ENCODE measurements at regions of chr17 and their contacts with region 1.

Region 1: DNA sequence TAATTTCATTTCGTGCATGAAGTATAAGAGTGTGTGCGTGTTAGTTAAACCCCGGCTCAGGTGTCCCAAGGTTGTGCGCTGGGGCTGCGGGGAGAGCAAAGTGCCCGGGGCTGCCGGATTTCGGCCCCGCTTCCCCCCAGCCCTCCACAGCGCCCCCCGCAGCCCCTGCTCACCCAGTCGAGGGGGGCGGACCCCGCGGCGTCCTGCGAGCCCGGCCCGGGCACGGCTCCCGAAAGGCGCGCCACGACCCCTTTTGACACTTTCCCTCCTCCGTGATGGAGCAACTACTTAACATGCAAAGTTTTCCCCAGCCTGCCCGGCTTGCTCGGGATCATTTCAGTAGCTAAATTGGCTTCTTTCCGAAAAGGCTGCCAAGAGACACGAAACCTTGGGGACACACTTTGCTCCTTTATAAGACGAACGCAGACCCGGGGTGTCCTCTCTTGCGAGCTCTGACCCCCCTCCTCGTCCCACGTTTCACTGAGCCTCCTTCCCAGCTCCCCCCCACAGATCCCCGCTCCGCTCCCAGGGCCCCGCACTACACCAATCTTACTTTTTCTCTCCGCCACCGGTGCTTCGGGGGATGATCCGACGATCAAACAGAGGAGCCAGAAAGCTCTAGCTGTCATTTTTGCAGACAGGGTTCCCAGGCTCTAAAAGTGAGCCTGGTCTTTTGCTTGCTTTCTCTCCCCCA is 552 bp downstream of the C17orf58 start:
- DNase-seq: peak in 2 of 3 donors; percentile 39 to 45
- H3K4me3 ChIP-seq: peak overlapping the region; percentile 25 to 83 (median 67)
- H3K27ac ChIP-seq: no peak overlapping the region
- H3K4me1 ChIP-seq: peaks cover 5 to 33% (median 27%) of the 10 kb centered on the region in 4 experiments
- H3K27me3 ChIP-seq: peaks cover 0 to 21% (median 8%) of the 10 kb centered on the region in 5 experiments

Region 2: DNA sequence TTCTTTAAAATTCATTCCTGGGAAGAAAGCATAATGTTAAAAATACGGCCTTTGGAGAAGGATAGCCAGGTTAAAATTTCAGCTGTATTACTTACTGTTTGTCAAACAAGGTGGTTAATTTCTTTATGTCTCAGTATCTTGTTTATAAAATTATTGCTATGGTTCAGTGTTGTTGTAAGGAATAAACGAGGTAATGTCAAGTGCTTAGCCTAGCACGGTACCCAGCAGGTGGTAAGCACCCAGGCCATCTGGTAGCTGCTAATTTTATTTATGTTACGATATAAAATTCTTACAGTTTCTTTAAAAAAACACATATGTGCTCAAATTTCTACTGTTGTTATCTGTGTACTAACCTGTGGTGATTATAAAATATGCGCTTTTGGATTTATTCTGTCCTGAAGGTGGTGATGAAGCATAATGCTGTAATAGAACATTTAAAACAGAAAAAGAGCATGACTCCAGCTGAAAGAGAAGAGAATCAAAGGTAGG is 48.3 kb before region 1 on chr17:
- CTCF ChIA-PET with region 1: no interaction called
- POLR2A ChIA-PET with region 1: no interaction called
- DNase-seq: no peak
- H3K4me3 ChIP-seq: no peak overlapping the region
- H3K27ac ChIP-seq: no peak overlapping the region
- H3K4me1 ChIP-seq: no peaks in the 10 kb centered on the region
- H3K27me3 ChIP-seq: no peaks in the 10 kb centered on the region

Region 3: DNA sequence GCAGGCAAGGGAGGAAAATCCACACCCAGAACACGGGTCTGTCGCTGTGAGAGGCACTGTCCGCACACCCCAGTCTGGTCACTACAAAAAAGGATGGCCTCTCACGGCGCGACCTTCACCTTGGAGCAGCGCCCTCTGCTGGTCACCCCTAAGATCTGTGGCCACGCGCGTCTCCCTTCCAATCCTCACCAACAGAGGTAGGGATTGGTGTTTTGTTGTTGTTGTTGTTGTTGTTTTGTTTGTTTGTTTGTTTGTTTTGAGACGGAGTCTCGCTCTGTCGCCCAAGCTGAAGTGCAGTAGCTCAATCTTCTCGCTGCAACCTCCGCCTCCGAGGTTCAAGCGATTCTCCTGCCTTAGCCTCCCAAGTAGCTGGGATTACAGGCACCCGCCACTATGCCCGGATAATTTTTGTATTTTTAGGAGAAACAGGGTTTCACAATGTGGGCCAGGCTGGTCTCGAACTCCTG is 15.5 kb after region 1 on chr17:
- CTCF ChIA-PET with region 1: interaction called, 10 read pairs
- POLR2A ChIA-PET with region 1: no interaction called
- DNase-seq: peak in 2 of 3 donors; percentile 61 to 68
- H3K4me3 ChIP-seq: peak overlapping the region; percentile 7 to 77 (median 68)
- H3K27ac ChIP-seq: no peak overlapping the region
- H3K4me1 ChIP-seq: peaks cover 0 to 4% (median 2%) of the 10 kb centered on the region in 4 experiments
- H3K27me3 ChIP-seq: no peaks in the 10 kb centered on the region

Region 4: DNA sequence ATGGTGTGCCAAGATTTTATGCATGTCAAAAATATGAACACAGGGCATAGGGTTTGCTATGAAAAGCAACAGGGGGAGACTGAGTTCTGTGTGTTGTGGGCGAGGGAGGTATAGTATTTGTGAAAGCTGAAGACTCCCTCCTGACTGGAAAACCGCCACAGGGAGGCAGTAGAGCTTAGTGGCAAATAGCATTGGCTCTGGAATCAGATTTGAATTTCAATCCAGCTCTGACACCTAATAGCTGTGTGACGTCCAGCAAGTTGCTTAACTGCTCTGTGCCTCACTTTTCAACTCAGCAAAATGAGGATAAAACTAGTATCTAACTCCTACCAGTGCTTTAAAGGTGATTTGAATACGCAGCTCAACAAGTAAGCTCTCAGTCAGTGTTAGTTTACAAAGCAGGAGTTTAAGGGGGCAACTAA is 61.8 kb after region 1 on chr17:
- CTCF ChIA-PET with region 1: no interaction called
- POLR2A ChIA-PET with region 1: no interaction called
- DNase-seq: peak; percentile 20 to 64 (median 58)
- H3K4me3 ChIP-seq: no peak overlapping the region
- H3K27ac ChIP-seq: no peak overlapping the region
- H3K4me1 ChIP-seq: peaks cover 0 to 6% (median 4%) of the 10 kb centered on the region in 4 experiments
- H3K27me3 ChIP-seq: no peaks in the 10 kb centered on the region

Region 5: GRCh38 chr17:68196944-68197595 is 201.4 kb after region 1 on chr17:
- CTCF ChIA-PET with region 1: no interaction called
- POLR2A ChIA-PET with region 1: no interaction called
- DNase-seq: peak in 2 of 3 donors; percentile 47 to 60
- H3K4me3 ChIP-seq: peak overlapping the region in 6 of 7 experiments; percentile 2 to 59 (median 26)
- H3K27ac ChIP-seq: no peak overlapping the region
- H3K4me1 ChIP-seq: peaks cover 6 to 55% (median 50%) of the 10 kb centered on the region in 4 experiments
- H3K27me3 ChIP-seq: peaks cover 0 to 79% (median 29%) of the 10 kb centered on the region in 5 experiments